ENCODE measurements at regions of chr4 and their contacts with region 1.

Region 1: GRCh38 chr4:101724093-101724492 is 66.4 kb upstream of the BANK1 start:
- H3K4me3 Mint-ChIP-seq: no peak overlapping the region
- H3K27ac Mint-ChIP-seq: no peak overlapping the region
- H3K4me1 Mint-ChIP-seq: no peaks in the 10 kb centered on the region
- H3K27me3 Mint-ChIP-seq: no peaks in the 10 kb centered on the region

Region 2: DNA sequence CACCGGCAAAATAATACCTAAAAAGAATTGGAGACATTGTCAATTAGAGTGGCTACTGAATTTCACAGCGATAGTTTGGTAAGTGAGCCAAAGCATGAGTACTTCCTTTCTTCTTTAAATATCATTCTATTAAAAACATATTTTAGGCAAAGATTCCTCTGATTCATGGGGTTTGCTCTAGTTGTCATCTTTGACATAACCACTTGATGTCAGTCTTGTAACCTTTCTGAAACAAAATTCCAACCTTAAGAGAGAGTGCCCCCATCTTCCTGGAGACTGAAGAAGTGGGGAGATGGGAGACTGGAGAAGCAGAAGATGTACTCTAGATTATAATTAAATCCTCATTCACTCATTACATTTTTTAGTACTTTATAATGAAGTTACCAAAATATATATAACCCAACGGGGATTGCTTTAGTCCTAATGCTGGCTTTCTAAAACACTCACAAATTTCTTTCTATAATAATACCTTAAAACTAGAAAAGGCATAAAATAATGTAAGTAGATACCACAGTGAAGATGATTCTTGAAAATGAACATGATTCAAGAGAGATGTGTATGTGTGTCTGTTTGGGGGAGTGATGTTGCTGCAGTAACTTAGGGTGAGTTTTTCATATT is 1302.6 kb before region 1 on chr4:
- intact Hi-C with region 1: loop called (anchors 10 kb)
- H3K4me3 Mint-ChIP-seq: no peak overlapping the region
- H3K27ac Mint-ChIP-seq: no peak overlapping the region
- H3K4me1 Mint-ChIP-seq: no peaks in the 10 kb centered on the region
- H3K27me3 Mint-ChIP-seq: no peaks in the 10 kb centered on the region

Measured in dendritic cell treated with granulocyte-macrophage colony-stimulating factor and Interleukin-4, amounts not matched to agents 40 ng/mL and 50 ng/mL, for 4 days (primary cell).